ENCODE measurements at regions of chr2 and their contacts with region 1.

Region 1: DNA sequence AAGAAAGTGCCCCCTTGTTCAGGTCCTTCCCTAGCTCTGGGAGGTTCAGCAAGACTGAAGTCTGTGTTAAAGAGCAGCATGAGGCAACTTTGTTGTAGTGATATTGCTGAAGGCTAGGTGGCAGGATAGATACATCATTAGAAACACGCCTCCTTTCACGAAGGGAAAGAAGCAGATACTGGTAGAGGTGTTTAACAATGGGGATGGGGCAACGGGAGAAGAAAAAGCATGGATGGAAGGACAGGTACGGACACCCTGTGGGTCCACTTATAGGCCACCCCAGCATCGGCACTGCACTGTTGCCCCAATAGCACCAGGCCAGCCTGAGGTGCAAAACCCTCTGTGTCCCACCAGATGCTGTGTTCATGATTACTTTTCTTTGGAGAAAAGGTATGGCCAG is 3.5 kb upstream of the IGFBP5 start:
- DNase-seq: peak in 1 of 2 donors; percentile 49
- ATAC-seq: peak; percentile 49
- H3K4me3 ChIP-seq: no peak overlapping the region
- H3K27ac ChIP-seq: no peak overlapping the region
- H3K4me1 ChIP-seq: peaks cover 0 to 7% of the 10 kb centered on the region in 2 donors
- H3K27me3 ChIP-seq: no peaks in the 10 kb centered on the region

Region 2: GRCh38 chr2:216735086-216735485 is 36.2 kb after region 1 on chr2:
- intact Hi-C with region 1: no loop called
- DNase-seq: no peak
- ATAC-seq: peak; percentile 31
- H3K4me3 ChIP-seq: no peak overlapping the region
- H3K27ac ChIP-seq: no peak overlapping the region
- H3K4me1 ChIP-seq: no peaks in the 10 kb centered on the region
- H3K27me3 ChIP-seq: no peaks in the 10 kb centered on the region

Region 3: DNA sequence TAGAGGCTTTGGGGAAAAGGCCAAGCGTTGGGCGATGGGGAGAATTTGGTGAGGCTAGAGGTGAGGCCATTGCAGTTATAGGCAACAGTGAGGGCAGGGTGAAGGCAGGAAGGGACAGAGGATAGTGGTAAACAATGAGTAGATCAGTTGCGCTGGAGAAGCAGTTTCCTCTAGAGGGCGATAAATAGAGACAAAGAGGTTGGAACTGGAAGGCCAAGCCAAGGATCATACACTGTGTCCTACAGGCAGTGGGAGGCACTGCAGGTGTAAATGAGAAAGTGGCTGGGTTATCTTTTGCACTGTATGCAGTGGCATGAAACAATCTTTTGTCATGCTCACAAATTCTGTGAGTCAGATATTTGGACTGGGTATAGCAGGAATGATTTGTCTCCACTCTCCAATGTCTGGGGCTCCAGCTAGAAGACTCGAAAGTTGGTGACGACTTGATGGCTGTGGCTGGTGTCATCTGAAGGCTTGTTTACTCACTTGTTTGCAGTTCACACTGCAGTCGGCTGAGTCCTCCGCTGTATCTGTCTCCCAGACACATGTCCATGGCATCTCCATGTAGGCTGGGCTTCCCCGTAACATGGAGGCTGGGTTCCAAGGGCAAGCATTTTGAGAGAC is 78.9 kb after region 1 on chr2:
- intact Hi-C with region 1: loop called in 1 of 2 experiments (anchors 5 kb)
- DNase-seq: no peak
- ATAC-seq: no peak
- H3K4me3 ChIP-seq: no peak overlapping the region
- H3K27ac ChIP-seq: no peak overlapping the region
- H3K4me1 ChIP-seq: peaks cover 0 to 1% of the 10 kb centered on the region in 2 donors
- H3K27me3 ChIP-seq: no peaks in the 10 kb centered on the region

Region 4: GRCh38 chr2:216974321-216975302 is 275.7 kb after region 1 on chr2:
- intact Hi-C with region 1: loop called (anchors 5 kb)
- DNase-seq: peak in 1 of 2 donors; percentile 69
- ATAC-seq: peak; percentile 82
- H3K4me3 ChIP-seq: no peak overlapping the region
- H3K27ac ChIP-seq: peak overlapping the region; percentile 57 to 88
- H3K4me1 ChIP-seq: peaks cover 12 to 31% of the 10 kb centered on the region in 2 donors
- H3K27me3 ChIP-seq: no peaks in the 10 kb centered on the region

Region 5: DNA sequence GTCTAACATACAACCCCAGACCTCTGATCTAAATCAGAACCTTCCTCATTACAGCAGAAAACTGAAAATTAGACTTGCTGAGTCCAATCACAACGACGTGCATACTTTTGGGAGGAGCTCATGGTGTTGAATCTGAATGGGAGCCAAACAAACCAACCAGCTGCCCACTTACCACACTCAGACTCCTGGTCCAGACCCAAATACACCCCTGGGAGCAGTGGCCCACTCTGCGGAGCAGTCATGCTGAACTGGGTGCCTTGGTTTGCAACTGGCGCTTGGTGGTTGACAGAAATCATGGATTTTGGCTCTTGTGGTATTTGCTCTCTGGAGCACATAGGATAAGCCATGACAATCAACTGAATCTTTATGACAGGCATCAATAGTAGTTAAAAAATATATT is 414.6 kb after region 1 on chr2:
- intact Hi-C with region 1: loop called (anchors 5 kb)
- DNase-seq: no peak
- ATAC-seq: no peak
- H3K4me3 ChIP-seq: no peak overlapping the region
- H3K27ac ChIP-seq: no peak overlapping the region
- H3K4me1 ChIP-seq: no peaks in the 10 kb centered on the region
- H3K27me3 ChIP-seq: no peaks in the 10 kb centered on the region

Region 6: DNA sequence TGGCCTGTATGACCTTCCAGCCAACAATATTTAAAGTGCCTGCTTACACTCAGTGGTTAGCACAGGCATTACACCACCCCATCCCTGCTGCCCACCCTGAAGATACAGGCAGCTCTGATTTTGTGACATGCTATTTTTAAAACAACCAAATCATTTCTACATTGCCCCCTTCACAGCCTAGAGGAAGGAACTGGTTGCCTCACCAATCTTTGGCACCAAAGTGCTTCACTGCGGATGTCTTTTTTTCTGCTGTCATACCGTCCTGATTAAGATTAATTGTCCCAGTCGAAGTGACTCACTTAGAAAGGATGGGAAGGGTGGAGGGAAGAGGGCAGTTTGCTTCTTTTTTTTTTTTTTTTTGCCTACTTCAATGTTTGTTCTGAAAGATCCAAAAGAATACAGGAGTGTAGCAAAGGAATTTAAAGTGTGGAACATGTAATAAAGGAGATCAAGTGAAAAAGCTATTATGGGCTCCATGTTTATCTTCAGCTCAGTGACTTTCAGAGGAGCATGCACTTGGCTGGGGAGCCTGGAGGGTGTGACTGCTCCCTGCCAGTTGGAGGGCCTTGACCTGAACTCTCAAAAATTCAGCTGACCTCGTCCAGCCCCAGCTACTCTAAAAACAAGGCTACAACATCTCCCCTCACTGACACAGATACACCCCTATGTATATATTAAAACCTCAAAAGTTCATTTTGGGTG is 662.0 kb after region 1 on chr2:
- intact Hi-C with region 1: loop called in 1 of 2 experiments (anchors 5 kb)
- DNase-seq: peak in 1 of 2 donors; percentile 64
- ATAC-seq: peak; percentile 79
- H3K4me3 ChIP-seq: no peak overlapping the region
- H3K27ac ChIP-seq: peak overlapping the region; percentile 92 to 94
- H3K4me1 ChIP-seq: peaks cover 15 to 21% of the 10 kb centered on the region in 2 donors
- H3K27me3 ChIP-seq: no peaks in the 10 kb centered on the region

Region 7: DNA sequence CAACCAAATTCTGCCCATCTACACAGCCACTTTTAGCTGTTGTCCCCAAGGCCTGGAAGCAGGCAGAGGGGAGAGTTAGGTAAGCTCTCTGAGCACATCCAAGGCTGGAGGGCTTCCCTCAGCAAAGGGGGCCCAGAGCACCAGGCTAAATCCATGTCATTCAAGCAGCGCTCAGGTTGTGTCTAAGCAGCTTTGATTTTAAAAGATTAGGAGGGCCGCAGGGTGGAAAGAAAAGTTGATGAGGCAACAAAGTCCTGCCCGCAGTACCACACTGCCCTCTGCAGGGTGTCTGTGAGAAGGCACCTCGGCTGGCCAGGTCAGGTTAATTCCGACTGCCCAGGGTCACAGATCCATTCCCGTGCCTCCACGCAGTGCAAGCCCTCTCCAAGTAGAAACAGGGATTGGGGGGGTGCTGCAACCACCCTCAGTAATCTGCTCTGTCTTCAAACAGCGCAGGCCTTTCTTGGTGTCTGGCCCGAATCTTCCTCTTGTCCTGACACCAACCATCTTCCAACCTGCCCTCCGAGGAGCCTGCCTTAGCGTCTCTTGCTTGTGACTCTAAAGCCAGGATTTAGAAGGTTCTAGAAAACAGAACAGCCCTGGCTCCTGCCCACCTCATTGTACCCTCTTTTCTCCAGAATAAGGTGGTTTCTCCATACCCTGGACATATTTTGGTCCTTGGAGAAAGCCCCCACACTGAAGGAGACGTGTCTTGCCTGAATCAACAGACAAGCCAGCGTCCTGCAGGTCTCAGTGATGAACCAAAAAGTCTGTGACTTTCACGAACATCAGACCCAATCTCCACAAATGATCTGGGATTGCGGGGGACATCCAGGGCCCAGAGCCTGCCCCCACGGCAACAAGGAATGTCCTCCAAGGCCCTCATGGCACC is 1014.7 kb after region 1 on chr2:
- intact Hi-C with region 1: loop called in 1 of 2 experiments (anchors 5 kb)
- DNase-seq: peak; percentile 85 to 93
- ATAC-seq: peak; percentile 93
- H3K4me3 ChIP-seq: no peak overlapping the region
- H3K27ac ChIP-seq: peak overlapping the region in 1 of 2 donors; percentile 29
- H3K4me1 ChIP-seq: peaks cover 0 to 2% of the 10 kb centered on the region in 2 donors
- H3K27me3 ChIP-seq: no peaks in the 10 kb centered on the region

Region 8: DNA sequence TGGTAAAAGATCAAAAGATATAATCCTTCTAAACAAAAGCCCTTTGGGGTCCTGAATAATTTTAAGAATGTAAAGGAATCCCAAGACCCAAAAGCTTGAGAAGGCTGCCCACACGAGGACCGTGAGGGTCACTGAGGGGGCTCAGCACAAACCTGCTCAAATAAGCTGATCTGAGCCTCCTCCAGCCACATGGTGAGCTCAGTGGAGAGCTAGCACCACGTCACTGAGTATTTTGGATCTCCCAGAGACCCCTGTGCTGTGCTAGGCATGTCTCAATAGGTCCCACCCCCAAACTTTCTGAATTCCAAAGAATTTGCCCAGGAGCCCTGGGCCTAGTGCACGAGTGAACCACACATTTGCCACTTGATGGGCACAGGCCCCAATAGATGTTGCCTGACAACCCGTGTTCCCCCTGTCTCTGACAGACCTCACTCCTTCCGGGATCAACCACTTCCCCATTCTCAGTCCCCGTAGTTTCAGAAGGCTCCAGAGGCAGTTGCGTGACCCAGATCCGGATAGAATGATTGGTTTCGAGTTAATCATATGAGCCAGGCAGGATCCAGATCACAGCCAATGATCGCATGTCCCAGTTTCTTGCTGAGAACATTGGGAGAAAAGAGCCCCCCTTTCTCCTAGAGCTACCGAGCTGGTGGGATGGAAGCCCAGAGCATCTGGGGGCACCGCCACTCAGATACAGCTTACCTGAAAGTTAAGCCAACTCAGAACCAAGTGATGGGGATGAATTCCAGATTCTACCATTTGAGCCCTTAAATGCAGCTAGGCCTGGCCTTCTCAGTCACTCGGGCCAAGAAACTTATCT is 1100.1 kb after region 1 on chr2:
- intact Hi-C with region 1: no loop called
- DNase-seq: peak in 1 of 2 donors; percentile 81
- ATAC-seq: no peak
- H3K4me3 ChIP-seq: no peak overlapping the region
- H3K27ac ChIP-seq: peak overlapping the region in 1 of 2 donors; percentile 29
- H3K4me1 ChIP-seq: no peaks in the 10 kb centered on the region
- H3K27me3 ChIP-seq: no peaks in the 10 kb centered on the region